ENCODE measurements at regions of chr4 and their contacts with region 1.

Region 1: DNA sequence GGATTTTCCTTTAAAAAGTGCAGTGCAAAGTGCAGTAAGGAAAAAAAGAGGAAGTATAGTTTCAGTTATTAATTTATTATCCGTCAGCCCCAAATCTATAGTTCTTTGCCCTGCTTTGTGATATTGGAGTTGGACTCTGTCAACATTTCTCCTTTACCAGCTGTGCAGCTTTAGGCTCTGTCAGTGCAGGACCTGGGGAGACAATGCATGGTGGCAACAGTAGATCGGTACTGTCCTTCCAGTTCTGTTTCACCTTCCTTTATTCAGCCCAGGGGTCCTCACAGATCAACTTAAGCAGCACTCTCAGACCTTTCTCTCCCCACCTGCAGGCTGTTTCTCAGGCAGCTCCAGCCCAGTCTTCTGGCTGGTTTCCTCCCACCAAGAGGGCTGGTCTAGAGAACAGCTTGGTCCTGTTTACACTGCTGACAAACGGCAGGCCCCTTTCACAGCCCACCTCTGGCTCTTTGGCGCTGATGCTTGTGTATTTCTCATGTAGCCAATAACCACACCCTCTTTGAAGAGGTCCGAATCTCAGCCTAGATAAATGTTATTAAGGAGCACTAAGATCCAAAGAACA is 71.6 kb downstream of the MCUB start:
- DNase-seq: peak; percentile 34
- ATAC-seq: peak; percentile 95
- H3K4me3 Mint-ChIP-seq: no peak overlapping the region
- H3K27ac Mint-ChIP-seq: peak overlapping the region; percentile 38
- H3K4me1 Mint-ChIP-seq: peaks cover 16% of the 10 kb centered on the region
- H3K27me3 Mint-ChIP-seq: no peaks in the 10 kb centered on the region
- CTCF ChIP-seq: no peak

Region 2: GRCh38 chr4:109389369-109390114 is 242.1 kb before region 1 on chr4:
- CTCF ChIA-PET with region 1: no interaction called
- POLR2A ChIA-PET with region 1: no interaction called
- DNase-seq: no peak
- ATAC-seq: peak; percentile 47
- H3K4me3 Mint-ChIP-seq: no peak overlapping the region
- H3K27ac Mint-ChIP-seq: peak overlapping the region; percentile 74; the same call in 1 of the 2 replicates
- H3K4me1 Mint-ChIP-seq: peaks cover 35% of the 10 kb centered on the region
- H3K27me3 Mint-ChIP-seq: no peaks in the 10 kb centered on the region
- CTCF ChIP-seq: no peak

Region 3: GRCh38 chr4:109645874-109646591 is 14.4 kb after region 1 on chr4:
- CTCF ChIA-PET with region 1: no interaction called
- POLR2A ChIA-PET with region 1: no interaction called
- DNase-seq: no peak
- ATAC-seq: no peak
- H3K4me3 Mint-ChIP-seq: no peak overlapping the region
- H3K27ac Mint-ChIP-seq: no peak overlapping the region
- H3K4me1 Mint-ChIP-seq: peaks cover 9% of the 10 kb centered on the region
- H3K27me3 Mint-ChIP-seq: no peaks in the 10 kb centered on the region
- CTCF ChIP-seq: no peak

Region 4: DNA sequence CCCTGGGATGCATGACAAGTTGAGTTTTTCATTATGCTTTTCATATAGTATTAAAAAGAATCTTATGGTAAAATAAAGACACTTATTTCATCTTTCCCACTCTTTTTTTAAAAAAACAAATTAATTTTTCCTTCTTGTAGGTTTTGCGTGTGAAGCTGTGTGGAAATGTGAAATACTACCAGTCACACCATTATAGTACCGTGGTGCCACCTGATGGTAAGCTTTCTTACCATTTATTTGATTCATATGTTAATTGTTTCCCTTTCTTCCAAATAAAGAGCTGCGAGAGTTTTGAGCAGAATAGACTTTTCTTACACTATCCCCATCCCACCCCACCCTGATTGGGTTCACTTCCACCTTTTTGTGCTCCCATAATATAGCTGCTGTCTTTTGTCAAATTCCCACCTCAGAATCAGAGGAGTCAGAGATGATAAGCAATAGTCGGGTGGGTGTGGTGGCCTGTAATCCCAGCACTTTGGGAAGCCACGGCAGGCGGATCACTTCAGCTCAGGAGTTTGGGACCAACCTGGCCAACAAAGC is 27.3 kb after region 1 on chr4:
- CTCF ChIA-PET with region 1: interaction called, 11 read pairs
- POLR2A ChIA-PET with region 1: no interaction called
- DNase-seq: no peak
- ATAC-seq: peak; percentile 37; the same call in 1 of the 2 replicates
- H3K4me3 Mint-ChIP-seq: no peak overlapping the region
- H3K27ac Mint-ChIP-seq: no peak overlapping the region
- H3K4me1 Mint-ChIP-seq: peaks cover 23% of the 10 kb centered on the region
- H3K27me3 Mint-ChIP-seq: no peaks in the 10 kb centered on the region
- CTCF ChIP-seq: no peak